Activated CD4-positive, alpha-beta T cell treated with anti-CD3 and anti-CD28 coated beads for 36 hours (primary cell): ENCODE measurements at regions of chr11 and their contacts with region 1.

Region 1: DNA sequence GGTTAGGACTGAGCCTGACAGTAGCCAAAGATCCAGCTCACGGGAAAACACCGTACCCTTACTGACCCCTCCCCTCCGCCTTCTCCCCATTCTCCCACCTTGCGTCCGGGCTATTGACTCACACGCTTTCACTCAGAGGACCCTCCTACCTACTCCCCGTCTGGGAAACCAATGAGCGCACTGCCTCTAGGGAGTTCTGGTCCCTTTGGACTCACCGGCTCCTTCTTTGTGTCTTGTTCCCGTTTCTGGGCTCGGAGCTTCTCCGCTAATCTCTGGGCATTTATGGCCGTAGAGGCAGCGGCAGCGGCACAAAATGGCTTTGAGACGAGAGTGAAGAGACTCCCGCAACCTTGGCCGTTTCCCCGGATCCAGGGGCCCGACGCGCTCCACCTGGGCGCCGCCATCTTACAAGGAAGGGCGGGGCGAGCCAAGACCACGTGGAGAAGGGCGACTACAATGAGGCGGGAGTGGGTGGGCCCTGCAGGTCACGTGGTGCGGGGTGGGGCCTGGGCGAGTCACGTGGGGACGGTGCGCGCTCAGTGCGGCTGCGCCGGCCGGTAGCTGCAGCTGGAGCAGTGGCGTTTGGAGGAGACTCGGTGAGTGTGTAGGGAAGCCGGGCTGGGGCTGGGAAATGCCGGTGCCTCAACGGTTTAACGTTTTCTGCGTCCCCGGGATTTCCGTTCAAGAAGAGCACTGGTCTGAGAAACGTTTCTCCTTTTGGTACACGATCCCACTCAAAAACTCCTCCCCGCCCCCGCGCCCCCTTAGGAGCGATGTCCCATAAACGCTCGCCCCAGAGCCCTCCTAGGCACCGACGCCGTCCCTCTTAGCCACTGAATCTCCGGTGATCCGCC is at the starts of genes FAM118B and RPUSD4:
- DNase-seq: peak; percentile 99
- ATAC-seq: peak; percentile 94
- H3K4me3 Mint-ChIP-seq: peak within 1 kb of the TSS; percentile 98
- H3K27ac Mint-ChIP-seq: peak within 1 kb of the TSS; percentile 93
- H3K4me1 Mint-ChIP-seq: peaks cover 39% of the 10 kb centered on the region
- H3K27me3 Mint-ChIP-seq: no peaks in the 10 kb centered on the region
- total RNA-seq, gene FAM118B: 8.9 to 9.0 TPM
- total RNA-seq, gene RPUSD4: 31.0 to 33.9 TPM

Region 2: DNA sequence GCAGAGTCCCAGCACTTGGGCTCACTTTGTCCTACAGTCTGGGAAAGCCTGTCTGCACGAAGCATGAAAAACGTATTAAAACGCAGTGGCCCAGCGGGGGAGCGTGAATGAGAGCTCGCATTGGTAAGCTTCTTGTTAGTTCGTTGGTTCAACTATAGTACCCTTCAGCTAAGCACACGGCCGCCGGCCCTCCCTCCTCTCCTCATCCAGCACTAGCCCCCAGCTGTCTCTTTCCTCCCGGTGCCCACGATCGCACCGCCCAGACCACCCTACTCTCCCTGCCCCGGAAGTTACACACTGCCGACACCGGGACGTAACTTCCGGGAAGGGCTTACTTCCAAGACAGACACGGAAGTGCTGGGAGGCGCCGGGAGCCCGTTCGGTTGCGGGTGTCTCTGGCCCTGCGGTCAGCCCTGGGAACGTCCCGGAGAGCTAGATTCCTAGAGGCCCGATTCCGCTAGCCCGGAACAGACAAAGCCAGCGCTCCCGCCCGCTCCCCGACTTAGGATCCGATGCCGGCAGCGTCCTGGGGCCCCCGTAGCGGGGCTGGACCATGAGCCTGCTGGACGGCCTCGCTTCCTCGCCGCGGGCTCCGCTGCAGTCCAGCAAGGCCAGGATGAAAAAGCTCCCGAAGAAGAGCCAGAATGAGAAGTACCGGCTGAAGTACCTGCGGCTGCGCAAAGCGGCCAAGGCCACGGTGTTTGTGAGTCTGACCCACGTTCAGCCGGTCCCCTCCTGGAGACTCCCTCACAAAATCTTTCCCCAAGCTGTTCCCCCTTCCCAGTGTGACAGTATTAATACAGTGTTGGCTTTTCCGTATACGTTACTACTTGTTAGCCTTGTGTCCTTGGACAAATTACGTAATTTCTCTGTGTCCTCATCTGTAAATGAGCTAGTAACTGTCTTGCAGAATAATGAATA is 1588.7 kb before region 1 on chr11 and contains the start of gene TBRG1:
- CTCF ChIA-PET with region 1: no interaction called
- POLR2A ChIA-PET with region 1: no interaction called
- intact Hi-C with region 1: loop called in 1 of 2 experiments (anchors 10 kb)
- DNase-seq: peak; percentile 87
- ATAC-seq: peak; percentile 99
- H3K4me3 Mint-ChIP-seq: peak within 1 kb of the TSS; percentile 93
- H3K27ac Mint-ChIP-seq: peak within 1 kb of the TSS; percentile 95
- H3K4me1 Mint-ChIP-seq: peaks cover 22% of the 10 kb centered on the region
- H3K27me3 Mint-ChIP-seq: peaks cover 5% of the 10 kb centered on the region
- total RNA-seq, gene TBRG1: 29.6 to 40.6 TPM

Region 3: GRCh38 chr11:125625630-125626287 is 585.7 kb before region 1 on chr11:
- CTCF ChIA-PET with region 1: no interaction called
- POLR2A ChIA-PET with region 1: no interaction called
- intact Hi-C with region 1: loop called in 1 of 2 experiments (anchors 1 kb)
- DNase-seq: peak; percentile 92
- ATAC-seq: peak; percentile 88
- H3K4me3 Mint-ChIP-seq: peak overlapping the region; percentile 88
- H3K27ac Mint-ChIP-seq: peak overlapping the region; percentile 98
- H3K4me1 Mint-ChIP-seq: peaks cover 17% of the 10 kb centered on the region
- H3K27me3 Mint-ChIP-seq: no peaks in the 10 kb centered on the region

Region 4: DNA sequence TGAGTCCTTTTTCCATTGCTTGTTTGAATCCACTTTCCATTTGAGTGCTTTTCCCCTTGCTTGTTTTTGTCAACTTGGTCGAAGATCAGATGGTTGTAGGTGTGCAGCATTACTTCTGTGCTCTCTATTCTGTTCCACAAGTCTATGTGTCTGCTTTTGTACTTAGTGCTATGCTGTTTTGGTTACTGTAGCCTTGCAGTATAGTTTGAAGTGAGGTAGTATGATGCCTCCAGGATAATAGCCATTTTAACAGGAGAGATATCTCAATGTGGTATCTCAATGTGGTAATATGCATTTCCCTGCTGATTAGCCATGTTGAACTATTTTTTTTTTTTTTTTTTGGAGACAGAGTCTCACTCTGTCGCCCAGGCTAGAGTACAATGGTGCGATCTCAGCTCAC is 547.6 kb before region 1 on chr11:
- CTCF ChIA-PET with region 1: no interaction called
- POLR2A ChIA-PET with region 1: no interaction called
- intact Hi-C with region 1: no loop called
- DNase-seq: no peak
- ATAC-seq: peak; percentile 39
- H3K4me3 Mint-ChIP-seq: no peak overlapping the region
- H3K27ac Mint-ChIP-seq: no peak overlapping the region
- H3K4me1 Mint-ChIP-seq: peaks cover 13% of the 10 kb centered on the region
- H3K27me3 Mint-ChIP-seq: no peaks in the 10 kb centered on the region

Region 5: GRCh38 chr11:126115816-126116331 is 95.6 kb before region 1 on chr11:
- CTCF ChIA-PET with region 1: no interaction called
- POLR2A ChIA-PET with region 1: no interaction called
- intact Hi-C with region 1: no loop called
- DNase-seq: no peak
- ATAC-seq: no peak
- H3K4me3 Mint-ChIP-seq: no peak overlapping the region
- H3K27ac Mint-ChIP-seq: no peak overlapping the region
- H3K4me1 Mint-ChIP-seq: no peaks in the 10 kb centered on the region
- H3K27me3 Mint-ChIP-seq: no peaks in the 10 kb centered on the region

Region 6: GRCh38 chr11:126257764-126258163 is 46.3 kb after region 1 on chr11:
- CTCF ChIA-PET with region 1: no interaction called
- POLR2A ChIA-PET with region 1: no interaction called
- intact Hi-C with region 1: no loop called
- DNase-seq: no peak
- ATAC-seq: no peak
- H3K4me3 Mint-ChIP-seq: no peak overlapping the region
- H3K27ac Mint-ChIP-seq: no peak overlapping the region
- H3K4me1 Mint-ChIP-seq: no peaks in the 10 kb centered on the region
- H3K27me3 Mint-ChIP-seq: no peaks in the 10 kb centered on the region

Region 7: DNA sequence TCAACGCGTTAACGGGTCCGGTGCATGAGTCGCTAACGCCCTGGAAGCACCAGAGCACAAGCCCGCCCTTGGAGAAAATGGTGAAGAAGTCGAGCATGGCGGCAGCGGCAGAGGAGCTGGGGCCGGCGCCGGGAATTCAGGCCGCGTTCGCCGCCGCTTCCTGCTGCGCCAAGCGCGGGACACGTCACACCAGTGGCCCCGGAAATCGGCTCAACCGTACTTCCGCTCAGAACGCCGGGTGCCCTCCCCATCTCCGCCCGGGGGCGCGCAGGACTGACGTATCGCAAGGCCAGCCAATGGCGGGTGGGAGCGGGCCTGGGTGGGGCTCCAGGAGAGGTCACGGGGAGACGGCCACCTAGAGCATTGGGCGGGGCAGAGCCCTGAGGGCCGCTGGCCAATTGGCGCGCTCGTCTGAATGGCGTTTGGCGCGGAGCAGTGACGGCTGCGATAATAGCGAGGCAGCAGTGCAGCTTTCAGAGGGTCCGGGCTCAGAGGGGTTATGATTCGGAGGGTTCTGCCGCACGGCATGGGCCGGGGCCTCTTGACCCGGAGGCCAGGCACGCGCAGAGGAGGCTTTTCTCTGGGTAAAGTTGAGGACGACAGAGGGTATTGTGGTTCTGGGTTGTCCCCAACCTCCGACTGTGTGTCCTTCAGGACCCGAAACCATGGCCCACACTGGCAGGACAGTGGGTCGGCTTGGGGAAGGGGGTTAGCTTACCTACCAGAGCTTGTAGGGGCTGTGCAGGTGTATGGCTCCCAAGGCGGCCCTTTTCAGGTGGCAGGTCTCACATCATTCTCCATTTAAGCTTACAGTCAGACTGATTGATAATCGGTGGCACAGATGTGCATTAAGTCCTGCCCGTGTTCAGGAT is 57.5 kb after region 1 on chr11 and contains the starts of genes FOXRED1 and SRPRA:
- CTCF ChIA-PET with region 1: no interaction called
- POLR2A ChIA-PET with region 1: no interaction called
- intact Hi-C with region 1: loop called (anchors 1 kb)
- DNase-seq: peak; percentile 100
- ATAC-seq: peak; percentile 100
- H3K4me3 Mint-ChIP-seq: peak within 1 kb of the TSS; percentile 86
- H3K27ac Mint-ChIP-seq: peak within 1 kb of the TSS; percentile 95
- H3K4me1 Mint-ChIP-seq: peaks cover 38% of the 10 kb centered on the region
- H3K27me3 Mint-ChIP-seq: no peaks in the 10 kb centered on the region
- total RNA-seq, gene FOXRED1: 39.0 to 43.7 TPM
- total RNA-seq, gene SRPRA: 131 to 139 TPM

Region 8: DNA sequence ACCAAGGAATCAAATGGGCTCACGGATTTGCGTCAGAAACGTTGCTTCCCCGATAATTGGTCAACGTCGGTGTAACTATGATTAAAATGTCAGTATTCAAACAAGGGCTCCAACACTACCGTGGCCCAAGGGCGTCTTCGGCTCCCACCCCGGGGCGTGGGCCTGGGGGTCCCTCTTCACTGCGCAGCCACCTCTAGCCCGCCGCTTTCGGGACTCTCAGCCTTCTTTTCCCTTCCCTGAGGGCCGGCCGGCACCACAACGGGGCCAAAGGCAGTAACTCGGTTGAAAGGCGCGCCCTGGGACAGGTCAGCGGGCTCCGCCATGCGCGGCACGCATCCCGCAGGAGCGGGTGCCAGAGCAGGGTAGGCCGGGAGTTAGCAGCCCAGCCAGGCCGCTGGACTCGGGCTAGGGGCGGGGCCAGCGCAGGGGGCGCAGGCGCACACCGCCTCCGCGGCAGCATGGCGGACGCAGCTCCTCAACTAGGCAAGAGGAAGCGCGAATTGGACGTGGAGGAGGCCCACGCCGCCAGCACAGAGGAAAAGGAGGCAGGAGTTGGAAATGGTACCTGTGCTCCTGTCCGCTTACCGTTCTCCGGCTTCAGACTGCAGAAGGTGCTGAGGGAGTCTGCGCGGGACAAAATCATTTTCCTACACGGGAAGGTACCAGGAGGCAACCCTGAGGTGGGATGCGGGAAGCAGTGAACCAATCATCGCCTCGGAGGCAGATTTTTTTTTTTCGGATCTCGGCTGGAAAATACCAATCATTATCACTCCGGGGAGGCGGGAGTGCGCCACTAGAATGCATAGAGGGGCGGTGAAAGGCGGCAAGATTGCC is 92.4 kb after region 1 on chr11 and contains the start of gene DCPS:
- CTCF ChIA-PET with region 1: no interaction called
- POLR2A ChIA-PET with region 1: interaction called, 3 read pairs
- intact Hi-C with region 1: loop called in 1 of 2 experiments (anchors 1 kb)
- DNase-seq: peak; percentile 92
- ATAC-seq: peak; percentile 93
- H3K4me3 Mint-ChIP-seq: peak within 1 kb of the TSS; percentile 85
- H3K27ac Mint-ChIP-seq: peak within 1 kb of the TSS; percentile 98
- H3K4me1 Mint-ChIP-seq: peaks cover 32% of the 10 kb centered on the region
- H3K27me3 Mint-ChIP-seq: no peaks in the 10 kb centered on the region
- total RNA-seq, gene DCPS: 29.7 to 39.3 TPM

Region 9: GRCh38 chr11:126480410-126481302 is 269.2 kb after region 1 on chr11:
- CTCF ChIA-PET with region 1: no interaction called
- POLR2A ChIA-PET with region 1: no interaction called
- intact Hi-C with region 1: loop called in 1 of 2 experiments (anchors 2 kb)
- DNase-seq: peak; percentile 83
- ATAC-seq: peak; percentile 83
- H3K4me3 Mint-ChIP-seq: no peak overlapping the region
- H3K27ac Mint-ChIP-seq: peak overlapping the region; percentile 81
- H3K4me1 Mint-ChIP-seq: peaks cover 12% of the 10 kb centered on the region
- H3K27me3 Mint-ChIP-seq: no peaks in the 10 kb centered on the region